Left cardiac atrium (tissue), 4 donors: ENCODE measurements at regions of chr12 and their contacts with region 1.

Region 1: GRCh38 chr12:123094349-123095074 is 56.4 kb downstream of the PITPNM2 start:
- DNase-seq: peak; percentile 66
- ATAC-seq: peak; percentile 27 to 60

Region 2: DNA sequence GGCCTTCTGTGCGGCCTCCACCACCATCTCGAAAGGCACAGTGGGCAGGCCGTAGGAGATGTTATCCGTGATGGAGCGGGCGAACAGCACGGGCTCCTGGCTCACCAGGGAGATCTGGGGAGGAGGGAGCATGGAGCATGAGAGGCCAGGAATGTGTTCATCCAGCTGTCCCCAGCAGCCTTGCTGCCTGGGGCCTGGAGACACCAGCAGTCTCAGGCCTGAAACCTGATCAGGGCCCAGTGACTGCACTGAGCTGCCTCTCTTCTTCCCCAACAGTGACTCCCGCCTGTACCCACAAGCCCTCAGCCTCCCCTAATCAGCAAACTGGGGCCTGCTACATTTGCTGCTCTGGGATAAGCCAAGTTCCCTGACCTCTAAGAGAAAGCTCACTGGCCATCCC is 159.2 kb before region 1 on chr12:
- intact Hi-C with region 1: no loop called
- DNase-seq: no peak
- ATAC-seq: no peak

Region 3: GRCh38 chr12:123131879-123132452 is 37.5 kb after region 1 on chr12:
- intact Hi-C with region 1: loop called in 1 of 2 experiments (anchors 5 kb)
- DNase-seq: peak; percentile 51
- ATAC-seq: peak; percentile 56 to 76